ENCODE measurements at regions of chr2 and their contacts with region 1.

Region 1: DNA sequence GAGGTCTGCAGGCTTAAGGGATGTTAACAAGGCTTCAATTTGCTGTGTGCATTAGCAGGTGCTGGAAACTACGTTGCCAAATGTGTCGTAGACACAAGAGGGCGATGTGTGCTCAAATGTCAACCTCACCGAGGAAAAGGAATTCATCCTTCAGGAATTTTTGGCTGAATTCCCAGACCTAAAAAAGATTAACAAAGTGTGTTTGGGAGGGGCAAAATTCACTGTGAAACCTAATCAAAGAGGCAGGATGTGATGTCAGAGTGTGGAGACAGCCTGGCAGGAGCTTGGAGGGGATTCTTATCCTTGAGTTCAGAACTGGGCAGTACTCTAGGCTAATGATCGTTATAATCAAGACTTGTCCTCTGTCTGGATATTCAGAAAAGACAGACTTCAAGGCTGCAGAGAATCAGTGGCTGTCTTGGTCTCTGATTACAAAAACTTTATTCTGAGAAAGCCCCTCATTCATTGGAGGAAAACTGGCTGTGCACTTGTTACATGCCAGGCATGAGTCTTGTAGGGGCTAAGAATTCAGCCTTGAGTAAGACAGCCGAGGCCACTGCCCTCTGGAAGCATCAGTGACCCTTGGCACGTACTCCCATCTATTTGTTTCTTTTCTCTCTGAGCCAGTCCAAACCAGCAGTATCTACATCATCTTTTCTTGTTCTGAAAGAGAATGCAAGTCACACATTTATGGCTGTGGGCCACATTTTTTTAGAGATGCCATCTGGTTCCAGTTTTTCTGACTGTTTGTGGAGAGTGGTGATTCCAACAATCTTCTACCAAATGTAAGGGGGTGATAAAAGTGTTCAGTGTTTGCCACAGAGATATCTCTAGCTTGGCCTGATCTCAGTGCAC is 18.7 kb upstream of the SCYGR1 start:
- DNase-seq: peak; percentile 59
- ATAC-seq: peak; percentile 91
- H3K4me3 Mint-ChIP-seq: no peak overlapping the region
- H3K27ac Mint-ChIP-seq: no peak overlapping the region
- H3K4me1 Mint-ChIP-seq: peaks cover 11% of the 10 kb centered on the region
- H3K27me3 Mint-ChIP-seq: no peaks in the 10 kb centered on the region
- CTCF ChIP-seq: peak; percentile 23; the same call in 1 of the 2 replicates

Region 2: DNA sequence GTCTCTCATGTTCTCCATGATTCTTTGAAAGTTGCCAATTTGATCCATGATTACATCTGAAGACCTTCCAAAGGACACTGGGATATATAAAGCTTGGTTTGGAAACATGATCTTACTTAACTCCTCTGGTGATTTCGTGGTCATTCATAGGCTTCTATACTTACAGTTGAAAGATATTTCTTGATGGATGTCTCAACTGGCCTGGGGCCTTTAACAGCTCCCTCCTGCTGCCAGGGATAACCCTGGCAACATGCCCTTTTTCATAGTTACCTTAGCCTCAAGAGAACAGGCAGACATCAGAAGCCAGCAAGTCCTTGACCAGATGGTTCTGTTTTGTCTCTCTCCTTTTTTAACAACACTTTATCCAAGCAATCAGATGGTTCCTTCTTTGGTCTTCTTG is 104.9 kb before region 1 on chr2:
- CTCF ChIA-PET with region 1: no interaction called
- POLR2A ChIA-PET with region 1: interaction called, 14 read pairs
- DNase-seq: no peak
- ATAC-seq: no peak
- H3K4me3 Mint-ChIP-seq: no peak overlapping the region
- H3K27ac Mint-ChIP-seq: no peak overlapping the region
- H3K4me1 Mint-ChIP-seq: no peaks in the 10 kb centered on the region
- H3K27me3 Mint-ChIP-seq: no peaks in the 10 kb centered on the region
- CTCF ChIP-seq: no peak